Activated CD4-positive, alpha-beta memory T cell treated with anti-CD3 and anti-CD28 coated beads for 36 hours (primary cell): ENCODE measurements at regions of chr10 and their contacts with region 1.

Region 1: GRCh38 chr10:91006001-91006751 is 85.3 kb upstream of the ANKRD1 start:
- DNase-seq: peak; percentile 73
- H3K4me3 Mint-ChIP-seq: no peak overlapping the region
- H3K27ac Mint-ChIP-seq: no peak overlapping the region
- H3K4me1 Mint-ChIP-seq: peaks cover 30% of the 10 kb centered on the region
- H3K27me3 Mint-ChIP-seq: no peaks in the 10 kb centered on the region

Region 2: DNA sequence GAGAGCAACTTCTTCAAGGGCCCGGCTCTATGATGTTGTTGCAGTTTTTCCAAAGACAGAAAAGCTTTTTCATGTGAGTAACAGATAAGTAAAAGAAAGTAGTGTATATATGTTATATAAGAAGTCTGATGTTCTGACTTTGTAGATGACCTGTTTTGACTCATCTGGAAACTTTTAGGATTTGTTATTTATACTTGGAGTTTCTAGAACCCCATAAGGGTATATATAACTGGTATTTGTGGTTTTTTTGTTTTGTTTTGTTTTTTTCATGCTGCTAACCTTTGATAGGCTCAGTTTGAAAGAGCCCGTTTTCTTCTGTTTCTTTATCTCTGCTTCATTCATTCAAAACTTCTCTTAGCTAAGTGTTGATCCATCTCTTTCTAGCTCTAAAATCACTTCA is 127.1 kb before region 1 on chr10:
- CTCF ChIA-PET with region 1: interaction called, 17 read pairs
- POLR2A ChIA-PET with region 1: no interaction called
- intact Hi-C with region 1: no loop called
- DNase-seq: no peak
- H3K4me3 Mint-ChIP-seq: no peak overlapping the region
- H3K27ac Mint-ChIP-seq: no peak overlapping the region
- H3K4me1 Mint-ChIP-seq: peaks cover 22% of the 10 kb centered on the region
- H3K27me3 Mint-ChIP-seq: no peaks in the 10 kb centered on the region

Region 3: DNA sequence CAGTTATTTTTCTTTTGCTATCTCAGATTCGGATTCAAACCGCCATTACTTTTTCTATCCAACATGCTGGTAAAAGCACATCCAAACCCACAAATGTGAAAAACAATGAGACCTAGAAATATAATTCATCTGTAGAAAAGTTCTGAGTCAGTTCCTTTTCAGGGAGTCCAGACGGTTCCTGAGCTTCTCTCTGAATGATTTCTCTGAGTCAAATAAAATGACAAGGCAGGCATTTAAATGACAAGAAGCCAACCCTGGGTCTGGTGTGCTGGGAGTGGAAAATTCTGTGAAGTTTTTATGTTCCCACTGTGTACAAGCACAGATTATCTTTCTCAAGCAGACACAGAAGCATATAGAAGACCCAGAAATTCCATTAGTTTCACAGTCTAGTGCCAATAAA is 11.0 kb after region 1 on chr10:
- CTCF ChIA-PET with region 1: interaction called, 14 read pairs
- POLR2A ChIA-PET with region 1: no interaction called
- intact Hi-C with region 1: no loop called
- DNase-seq: no peak
- H3K4me3 Mint-ChIP-seq: no peak overlapping the region
- H3K27ac Mint-ChIP-seq: no peak overlapping the region
- H3K4me1 Mint-ChIP-seq: peaks cover 3% of the 10 kb centered on the region
- H3K27me3 Mint-ChIP-seq: peaks cover 6% of the 10 kb centered on the region

Region 4: GRCh38 chr10:91088300-91089140 is 82.3 kb after region 1 on chr10:
- CTCF ChIA-PET with region 1: interaction called, 11 read pairs
- POLR2A ChIA-PET with region 1: no interaction called
- intact Hi-C with region 1: loop called (anchors 2 kb)
- DNase-seq: no peak
- H3K4me3 Mint-ChIP-seq: no peak overlapping the region
- H3K27ac Mint-ChIP-seq: no peak overlapping the region
- H3K4me1 Mint-ChIP-seq: no peaks in the 10 kb centered on the region
- H3K27me3 Mint-ChIP-seq: no peaks in the 10 kb centered on the region

Region 5: DNA sequence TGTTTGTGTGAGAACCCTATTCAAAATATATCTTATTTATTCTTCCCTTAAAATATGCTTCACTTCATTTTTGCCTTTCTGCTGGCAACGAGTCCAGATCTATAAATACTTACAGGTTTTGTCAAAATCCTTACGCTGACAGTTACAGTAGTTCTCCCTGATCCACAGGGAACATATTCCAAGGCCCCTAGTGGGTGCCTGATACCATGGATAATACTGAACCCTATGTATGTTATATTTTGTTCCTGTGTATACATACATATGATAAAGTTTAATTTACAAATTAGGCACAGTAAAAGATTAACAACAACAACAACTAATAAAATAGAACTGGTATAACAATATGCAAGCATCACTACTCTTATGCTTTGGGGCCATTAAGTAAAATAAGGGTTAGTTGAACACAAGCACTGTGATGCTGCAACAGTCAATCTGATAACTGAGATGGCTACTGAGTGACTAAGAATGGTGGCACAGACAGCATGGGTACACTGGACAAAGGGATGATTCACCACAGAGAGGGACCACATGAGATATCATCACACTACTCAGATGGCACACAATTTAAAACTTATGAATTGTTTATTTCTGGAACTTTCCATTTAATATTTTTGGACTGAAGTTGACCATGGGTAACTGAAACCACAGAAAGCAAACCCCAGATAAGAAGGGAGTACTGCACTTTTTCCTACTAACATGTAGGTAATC is 184.9 kb after region 1 on chr10:
- CTCF ChIA-PET with region 1: no interaction called
- POLR2A ChIA-PET with region 1: no interaction called
- intact Hi-C with region 1: loop called (anchors 2 kb)
- DNase-seq: no peak
- H3K4me3 Mint-ChIP-seq: no peak overlapping the region
- H3K27ac Mint-ChIP-seq: no peak overlapping the region
- H3K4me1 Mint-ChIP-seq: peaks cover 74% of the 10 kb centered on the region
- H3K27me3 Mint-ChIP-seq: no peaks in the 10 kb centered on the region

Region 6: GRCh38 chr10:91251430-91252056 is 245.4 kb after region 1 on chr10:
- CTCF ChIA-PET with region 1: interaction called, 208 read pairs
- POLR2A ChIA-PET with region 1: interaction called, 4 read pairs
- intact Hi-C with region 1: loop called (anchors 1 kb)
- DNase-seq: peak; percentile 63
- H3K4me3 Mint-ChIP-seq: no peak overlapping the region
- H3K27ac Mint-ChIP-seq: no peak overlapping the region
- H3K4me1 Mint-ChIP-seq: peaks cover 4% of the 10 kb centered on the region
- H3K27me3 Mint-ChIP-seq: no peaks in the 10 kb centered on the region

Region 7: DNA sequence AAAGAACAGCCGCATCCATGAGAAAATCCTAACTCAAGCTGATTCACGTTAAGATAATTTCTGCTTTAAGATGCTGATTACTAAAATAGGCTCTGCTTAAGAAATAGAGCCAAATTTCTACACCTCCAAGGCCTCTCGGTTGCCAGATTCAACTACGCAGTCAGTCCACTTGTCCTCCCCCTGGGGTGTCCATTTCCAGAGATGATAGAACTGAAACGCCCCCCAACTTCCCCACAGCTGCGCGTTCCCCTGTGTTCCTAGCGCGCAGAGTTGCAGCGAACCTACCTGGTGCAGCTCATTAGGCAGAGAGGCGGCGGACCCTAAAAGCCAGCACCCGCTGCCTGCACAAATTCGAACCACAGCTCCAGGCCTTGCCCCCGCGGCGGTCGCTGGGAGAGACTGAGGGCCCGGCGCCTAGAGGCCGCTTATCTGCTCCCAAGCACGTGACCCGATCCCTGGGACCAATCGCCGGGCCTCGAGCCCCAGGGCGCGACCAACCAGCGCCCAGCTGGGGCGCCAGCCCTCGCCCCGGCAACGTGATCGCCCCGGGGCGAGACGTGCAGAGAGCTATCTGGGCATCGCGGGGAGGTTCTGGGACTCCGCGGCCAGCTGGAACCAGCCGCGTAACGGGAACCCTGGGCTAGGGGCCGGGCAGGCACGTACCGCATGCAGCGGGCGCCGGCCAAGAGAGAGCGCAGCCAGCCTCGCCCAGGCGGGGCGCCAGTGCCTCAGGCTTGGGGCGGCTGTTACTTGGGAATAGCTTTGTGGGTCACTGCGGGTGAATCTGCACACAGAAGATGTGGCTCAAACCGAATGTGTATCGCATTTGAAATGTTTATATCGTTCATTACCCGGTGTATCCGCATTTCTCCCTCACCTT is 626.7 kb after region 1 on chr10 and contains the start of gene PPP1R3C:
- CTCF ChIA-PET with region 1: interaction called, 3 read pairs
- POLR2A ChIA-PET with region 1: no interaction called
- intact Hi-C with region 1: loop called (anchors 2 kb)
- DNase-seq: peak; percentile 70
- H3K4me3 Mint-ChIP-seq: peak within 1 kb of the TSS; percentile 43
- H3K27ac Mint-ChIP-seq: no peak within 1 kb of the TSS
- H3K4me1 Mint-ChIP-seq: peaks cover 6% of the 10 kb centered on the region
- H3K27me3 Mint-ChIP-seq: peaks cover 47% of the 10 kb centered on the region
- total RNA-seq, gene PPP1R3C: 0.07 TPM in 1 of 2 experiments, not detected in the other